Sigmoid colon (tissue), 7 donors: ENCODE measurements at regions of chr7 and their contacts with region 1.

Region 1: GRCh38 chr7:141575164-141575563 is 24.0 kb downstream of the AGK start:
- DNase-seq: no peak
- H3K4me3 ChIP-seq: no peak overlapping the region
- H3K27ac ChIP-seq: no peak overlapping the region
- H3K4me1 ChIP-seq: no peaks in the 10 kb centered on the region
- H3K27me3 ChIP-seq: no peaks in the 10 kb centered on the region
- CTCF ChIP-seq: no peak
- EP300 ChIP-seq: no peak
- POLR2A ChIP-seq: no peak

Region 2: GRCh38 chr7:141610671-141611070 is 35.5 kb after region 1 on chr7:
- intact Hi-C with region 1: loop called (anchors 2 kb)
- DNase-seq: no peak
- H3K4me3 ChIP-seq: no peak overlapping the region
- H3K27ac ChIP-seq: no peak overlapping the region
- H3K4me1 ChIP-seq: no peaks in the 10 kb centered on the region
- H3K27me3 ChIP-seq: no peaks in the 10 kb centered on the region
- CTCF ChIP-seq: no peak
- EP300 ChIP-seq: no peak
- POLR2A ChIP-seq: no peak